Activated CD4-positive, alpha-beta T cell treated with anti-CD3 and anti-CD28 coated beads for 36 hours (primary cell): ENCODE measurements at regions of chr1 and their contacts with region 1.

Region 1: DNA sequence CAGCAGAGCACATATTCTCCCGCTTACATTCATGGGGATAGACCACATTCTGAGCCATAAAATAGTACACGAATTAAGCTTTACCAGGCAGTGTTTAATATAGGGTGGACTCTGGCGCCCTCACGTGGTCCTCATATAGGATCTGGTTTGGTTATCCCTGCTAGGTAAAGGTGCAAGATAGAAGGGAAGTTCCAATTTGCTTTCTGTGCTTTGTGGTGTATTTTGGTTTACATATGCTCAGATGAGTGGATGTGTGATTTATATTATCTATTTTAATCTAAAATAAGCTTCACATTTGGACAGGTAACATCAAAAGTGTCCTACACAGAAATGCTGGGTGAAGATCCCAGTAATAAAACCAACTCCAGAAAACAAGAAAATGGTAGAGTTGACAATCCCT is 3.6 kb downstream of the CR1 start:
- DNase-seq: peak; percentile 85
- ATAC-seq: peak; percentile 70
- H3K4me3 Mint-ChIP-seq: no peak overlapping the region
- H3K27ac Mint-ChIP-seq: peak overlapping the region; percentile 30
- H3K4me1 Mint-ChIP-seq: peaks cover 24% of the 10 kb centered on the region
- H3K27me3 Mint-ChIP-seq: peaks cover 32% of the 10 kb centered on the region

Region 2: GRCh38 chr1:206992790-206993189 is 506.8 kb before region 1 on chr1:
- CTCF ChIA-PET with region 1: interaction called, 3 read pairs
- POLR2A ChIA-PET with region 1: no interaction called
- intact Hi-C with region 1: loop called in 1 of 2 experiments (anchors 5 kb)
- DNase-seq: no peak
- ATAC-seq: no peak
- H3K4me3 Mint-ChIP-seq: no peak overlapping the region
- H3K27ac Mint-ChIP-seq: no peak overlapping the region
- H3K4me1 Mint-ChIP-seq: no peaks in the 10 kb centered on the region
- H3K27me3 Mint-ChIP-seq: peaks cover 16% of the 10 kb centered on the region

Region 3: GRCh38 chr1:207077470-207078377 is 421.8 kb before region 1 on chr1:
- CTCF ChIA-PET with region 1: interaction called, 22 read pairs
- POLR2A ChIA-PET with region 1: no interaction called
- intact Hi-C with region 1: loop called in 1 of 2 experiments (anchors 1 kb)
- DNase-seq: peak; percentile 76
- ATAC-seq: peak; percentile 92
- H3K4me3 Mint-ChIP-seq: no peak overlapping the region
- H3K27ac Mint-ChIP-seq: no peak overlapping the region
- H3K4me1 Mint-ChIP-seq: no peaks in the 10 kb centered on the region
- H3K27me3 Mint-ChIP-seq: peaks cover 8% of the 10 kb centered on the region

Region 4: GRCh38 chr1:207181838-207182237 is 317.7 kb before region 1 on chr1:
- CTCF ChIA-PET with region 1: interaction called, 3 read pairs
- POLR2A ChIA-PET with region 1: no interaction called
- intact Hi-C with region 1: loop called in 1 of 2 experiments (anchors 5 kb)
- DNase-seq: no peak
- ATAC-seq: no peak
- H3K4me3 Mint-ChIP-seq: no peak overlapping the region
- H3K27ac Mint-ChIP-seq: no peak overlapping the region
- H3K4me1 Mint-ChIP-seq: no peaks in the 10 kb centered on the region
- H3K27me3 Mint-ChIP-seq: no peaks in the 10 kb centered on the region

Region 5: DNA sequence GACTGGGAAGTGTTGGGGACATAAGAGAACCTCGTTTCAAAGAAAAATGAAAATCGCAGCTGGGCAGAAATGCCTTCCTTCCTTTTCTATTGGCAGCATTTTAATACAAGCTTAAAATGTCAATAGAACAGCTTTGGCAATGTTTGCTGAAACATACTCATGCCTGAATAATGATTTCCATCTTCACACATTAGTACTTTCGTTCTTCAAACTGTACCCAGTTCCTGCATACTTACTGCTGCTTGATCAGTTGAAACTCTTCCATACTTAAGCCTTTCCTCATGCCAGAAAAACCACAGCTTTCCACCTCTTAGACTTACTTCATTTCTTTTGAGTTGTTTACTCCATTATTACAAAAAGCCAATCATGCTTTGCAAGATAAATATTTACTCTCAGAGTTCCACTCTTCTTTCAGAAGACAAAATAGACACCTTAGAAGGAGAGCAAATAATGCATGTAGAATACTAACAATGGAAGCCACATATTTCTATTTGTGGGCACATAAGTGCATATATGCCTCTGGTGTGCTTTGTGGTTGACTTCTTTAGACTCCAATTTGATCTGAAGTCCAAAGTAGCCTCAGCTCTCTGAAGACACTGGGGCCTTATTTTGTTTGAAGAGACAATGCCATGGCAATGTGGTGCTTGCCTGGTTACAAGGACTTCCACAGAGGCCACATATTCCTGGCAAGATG is 200.8 kb before region 1 on chr1:
- CTCF ChIA-PET with region 1: no interaction called
- POLR2A ChIA-PET with region 1: no interaction called
- intact Hi-C with region 1: no loop called
- DNase-seq: no peak
- ATAC-seq: no peak
- H3K4me3 Mint-ChIP-seq: no peak overlapping the region
- H3K27ac Mint-ChIP-seq: no peak overlapping the region
- H3K4me1 Mint-ChIP-seq: peaks cover 16% of the 10 kb centered on the region
- H3K27me3 Mint-ChIP-seq: no peaks in the 10 kb centered on the region

Region 6: DNA sequence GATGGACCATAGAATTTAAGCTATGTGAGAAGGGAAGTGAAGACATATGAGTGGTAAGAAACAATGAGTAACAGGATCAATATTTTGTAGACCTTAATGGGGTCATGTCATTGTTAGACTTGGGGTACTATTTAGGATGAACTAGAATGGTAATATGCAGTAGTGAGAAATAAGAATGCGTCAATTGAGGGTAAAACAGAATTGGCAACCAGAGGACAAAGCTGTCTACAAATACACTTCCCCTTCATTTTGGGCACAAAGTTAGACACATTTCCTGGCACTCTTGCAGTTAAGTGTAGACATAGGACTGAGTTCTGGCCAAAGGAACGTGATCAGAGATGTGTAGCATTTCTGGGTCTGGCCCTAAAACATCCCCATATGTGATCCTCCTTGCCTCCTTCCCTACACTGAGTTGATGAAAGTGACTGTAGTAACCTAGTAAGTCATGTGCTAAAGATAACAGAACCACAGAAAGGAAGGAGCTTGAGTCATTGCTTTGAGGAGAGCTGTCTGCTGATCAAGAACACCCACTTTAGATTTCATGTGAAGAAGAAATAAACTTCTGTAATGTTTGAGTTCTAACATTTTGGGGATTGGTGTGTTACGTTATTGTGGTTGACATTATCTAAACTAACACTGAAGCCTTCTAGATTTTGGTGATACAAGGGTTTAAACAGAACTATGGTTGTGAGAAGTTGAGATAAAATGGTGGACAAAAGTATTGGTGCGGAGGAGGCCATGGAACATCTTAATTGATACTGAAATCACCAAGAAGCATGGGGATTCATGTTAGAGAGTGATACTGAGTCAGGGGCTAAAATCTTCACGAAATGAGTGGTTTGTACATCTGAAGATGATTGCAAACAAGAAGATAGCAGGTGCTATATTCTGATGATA is 136.4 kb before region 1 on chr1:
- CTCF ChIA-PET with region 1: interaction called, 3 read pairs
- POLR2A ChIA-PET with region 1: interaction called, 3 read pairs
- intact Hi-C with region 1: loop called in 1 of 2 experiments (anchors 1 kb)
- DNase-seq: peak; percentile 37
- ATAC-seq: peak; percentile 89
- H3K4me3 Mint-ChIP-seq: no peak overlapping the region
- H3K27ac Mint-ChIP-seq: no peak overlapping the region
- H3K4me1 Mint-ChIP-seq: peaks cover 2% of the 10 kb centered on the region
- H3K27me3 Mint-ChIP-seq: no peaks in the 10 kb centered on the region

Region 7: DNA sequence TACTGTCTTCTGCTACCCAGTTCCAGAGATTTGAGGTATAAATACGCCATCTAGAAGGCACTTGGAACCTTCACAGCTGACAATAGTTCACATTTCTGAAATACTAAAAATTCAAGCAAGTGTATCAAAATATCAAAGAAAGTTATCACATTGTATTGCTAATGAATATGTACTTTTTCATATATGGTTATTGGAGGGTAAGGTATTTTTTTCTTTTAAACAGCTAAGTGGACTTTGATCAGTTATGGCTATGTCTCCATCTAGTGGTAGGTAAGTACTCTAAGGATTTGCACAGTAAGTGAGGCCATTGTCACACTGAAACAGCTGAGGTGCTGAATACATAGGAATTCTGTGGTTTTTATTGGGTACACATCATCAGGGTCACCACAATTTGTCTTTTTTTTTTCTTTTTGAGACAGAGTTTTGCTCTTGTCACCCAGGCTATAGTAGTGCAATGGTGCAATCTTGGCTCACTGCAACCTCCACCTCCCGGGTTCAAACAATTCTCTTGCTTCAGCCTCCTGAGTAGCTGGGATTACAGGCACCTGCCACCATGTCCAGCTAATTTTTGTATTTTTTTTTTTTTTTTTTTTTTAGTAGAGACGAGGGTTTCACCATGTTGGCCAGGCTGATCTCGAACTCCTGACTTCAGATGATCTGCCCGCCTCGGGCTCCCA is 94.6 kb before region 1 on chr1:
- CTCF ChIA-PET with region 1: interaction called, 8 read pairs
- POLR2A ChIA-PET with region 1: interaction called, 5 read pairs
- intact Hi-C with region 1: loop called (anchors 1 to 2 kb)
- DNase-seq: no peak
- ATAC-seq: peak; percentile 78
- H3K4me3 Mint-ChIP-seq: no peak overlapping the region
- H3K27ac Mint-ChIP-seq: no peak overlapping the region
- H3K4me1 Mint-ChIP-seq: peaks cover 25% of the 10 kb centered on the region
- H3K27me3 Mint-ChIP-seq: no peaks in the 10 kb centered on the region

Region 8: DNA sequence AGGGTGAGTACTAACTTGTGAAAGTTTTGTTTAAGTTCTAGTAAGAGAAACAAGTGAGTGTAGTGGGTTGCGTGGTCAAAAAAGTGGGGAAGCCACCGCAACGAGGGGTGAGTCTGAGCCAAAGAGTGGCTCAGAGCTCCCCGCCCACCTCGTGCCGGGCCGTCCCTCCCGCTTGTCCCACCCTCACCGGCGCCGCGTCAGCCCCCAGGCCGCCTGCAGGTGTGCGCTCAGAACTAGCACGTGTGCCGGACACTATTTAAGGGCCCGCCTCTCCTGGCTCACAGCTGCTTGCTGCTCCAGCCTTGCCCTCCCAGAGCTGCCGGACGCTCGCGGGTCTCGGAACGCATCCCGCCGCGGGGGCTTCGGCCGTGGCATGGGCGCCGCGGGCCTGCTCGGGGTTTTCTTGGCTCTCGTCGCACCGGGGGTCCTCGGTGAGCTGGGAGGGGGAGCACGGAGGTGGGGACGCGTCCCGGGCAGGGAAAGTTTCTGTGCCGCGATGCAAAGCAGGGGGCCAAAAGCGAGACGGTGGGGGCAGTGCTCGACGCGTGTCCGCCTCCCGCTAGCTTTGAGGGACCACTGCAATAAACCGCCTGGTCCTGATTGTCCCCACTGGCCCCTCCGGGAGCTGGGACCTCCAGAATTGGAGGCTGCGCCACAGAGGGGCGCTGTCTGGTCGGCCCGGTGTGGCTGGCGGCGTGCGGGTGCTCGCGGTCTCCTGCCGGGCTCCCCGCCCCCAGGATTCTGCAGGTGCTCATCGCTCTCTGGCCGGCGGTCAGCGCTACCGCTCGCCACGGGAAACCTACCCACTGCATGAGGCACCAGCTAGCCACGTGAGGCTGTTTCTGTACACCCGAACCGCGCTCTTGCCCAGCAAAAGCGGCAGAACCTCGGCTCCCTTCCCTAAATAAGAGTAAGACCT is 45.3 kb before region 1 on chr1 and contains the start of gene CR2:
- CTCF ChIA-PET with region 1: interaction called, 6 read pairs
- POLR2A ChIA-PET with region 1: no interaction called
- intact Hi-C with region 1: loop called (anchors 2 to 5 kb)
- DNase-seq: peak; percentile 73
- ATAC-seq: peak; percentile 83
- H3K4me3 Mint-ChIP-seq: peak within 1 kb of the TSS; percentile 53
- H3K27ac Mint-ChIP-seq: peak within 1 kb of the TSS; percentile 7
- H3K4me1 Mint-ChIP-seq: peaks cover 12% of the 10 kb centered on the region
- H3K27me3 Mint-ChIP-seq: peaks cover 25% of the 10 kb centered on the region
- total RNA-seq, gene CR2: 0.28 to 0.39 TPM